ENCODE measurements at regions of chr3 and their contacts with region 1.

Region 1: DNA sequence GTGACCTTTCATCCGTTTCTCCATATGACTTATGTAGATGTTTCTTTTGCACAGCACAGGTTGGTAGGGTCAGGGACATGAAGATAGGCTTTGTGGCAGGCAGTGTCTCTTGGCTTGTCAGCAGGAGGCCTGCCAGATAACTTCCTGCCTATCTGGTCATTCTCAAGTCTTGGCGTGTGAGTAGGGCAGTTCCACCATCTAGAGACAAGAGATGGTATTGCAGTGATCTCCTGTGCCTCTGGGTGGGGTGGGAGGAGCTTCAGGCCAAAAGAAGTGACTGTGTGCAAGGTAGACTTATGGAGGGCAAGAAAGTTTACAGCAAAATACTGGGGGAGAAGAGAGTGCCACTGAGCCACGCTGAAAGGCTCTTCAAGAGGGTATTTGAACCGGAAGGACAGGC is 11.0 kb downstream of the TEX264 start:
- DNase-seq: peak; percentile 35 to 83 (median 76)
- ATAC-seq: peak; percentile 86
- H3K4me3 ChIP-seq: peak overlapping the region; percentile 46
- H3K4me3 Mint-ChIP-seq: peak overlapping the region; percentile 53 to 91 (median 73)
- H3K27ac ChIP-seq: peak overlapping the region; percentile 63
- H3K27ac Mint-ChIP-seq: peak overlapping the region; percentile 42 to 95 (median 84)
- H3K4me1 ChIP-seq: peaks cover 85 to 89% of the 10 kb centered on the region in 2 donors
- H3K4me1 Mint-ChIP-seq: peaks cover 80 to 100% (median 97%) of the 10 kb centered on the region in 7 donors
- H3K27me3 ChIP-seq: no peaks in the 10 kb centered on the region
- H3K27me3 Mint-ChIP-seq: no peaks in the 10 kb centered on the region

Region 2: DNA sequence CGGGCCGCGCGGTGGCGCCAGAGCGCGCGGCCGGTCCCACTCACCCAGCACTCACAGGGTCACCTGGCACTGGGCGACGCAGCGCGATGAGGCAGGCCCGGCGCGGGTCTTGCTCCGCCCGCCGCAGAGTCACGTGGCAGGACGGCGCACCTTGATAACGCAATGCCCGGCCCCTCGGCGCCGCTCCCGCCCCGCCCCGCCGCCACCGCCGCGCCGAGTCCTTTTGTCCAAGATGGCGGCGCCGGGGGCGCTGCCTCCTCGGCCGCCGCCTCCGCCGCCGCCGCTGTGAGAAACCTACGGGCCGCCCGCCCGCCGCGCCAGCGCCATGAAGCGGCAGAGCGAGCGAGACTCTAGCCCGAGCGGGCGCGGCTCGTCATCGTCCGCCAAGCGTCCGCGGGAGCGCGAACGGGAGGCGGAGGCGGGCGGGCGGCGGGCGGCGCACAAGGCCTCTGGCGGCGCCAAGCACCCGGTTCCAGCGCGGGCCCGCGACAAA is 291.0 kb before region 1 on chr3 and contains the start of gene RBM15B:
- CTCF ChIA-PET with region 1: interaction called, 11 read pairs
- POLR2A ChIA-PET with region 1: interaction called, 7 read pairs
- intact Hi-C with region 1: loop called (anchors 1 kb)
- DNase-seq: peak; percentile 94 to 98 (median 96)
- ATAC-seq: peak; percentile 95
- H3K4me3 ChIP-seq: peak within 1 kb of the TSS; percentile 52
- H3K4me3 Mint-ChIP-seq: peak within 1 kb of the TSS; percentile 76 to 89 (median 83)
- H3K27ac ChIP-seq: peak within 1 kb of the TSS; percentile 90
- H3K27ac Mint-ChIP-seq: peak within 1 kb of the TSS; percentile 79 to 91 (median 88)
- H3K4me1 ChIP-seq: peaks cover 46 to 53% of the 10 kb centered on the region in 2 donors
- H3K4me1 Mint-ChIP-seq: peaks cover 35 to 75% (median 67%) of the 10 kb centered on the region in 7 donors
- H3K27me3 ChIP-seq: no peaks in the 10 kb centered on the region
- H3K27me3 Mint-ChIP-seq: no peaks in the 10 kb centered on the region
- total RNA-seq, gene RBM15B: 29.9 to 40.6 (median 31.3) TPM

Region 3: DNA sequence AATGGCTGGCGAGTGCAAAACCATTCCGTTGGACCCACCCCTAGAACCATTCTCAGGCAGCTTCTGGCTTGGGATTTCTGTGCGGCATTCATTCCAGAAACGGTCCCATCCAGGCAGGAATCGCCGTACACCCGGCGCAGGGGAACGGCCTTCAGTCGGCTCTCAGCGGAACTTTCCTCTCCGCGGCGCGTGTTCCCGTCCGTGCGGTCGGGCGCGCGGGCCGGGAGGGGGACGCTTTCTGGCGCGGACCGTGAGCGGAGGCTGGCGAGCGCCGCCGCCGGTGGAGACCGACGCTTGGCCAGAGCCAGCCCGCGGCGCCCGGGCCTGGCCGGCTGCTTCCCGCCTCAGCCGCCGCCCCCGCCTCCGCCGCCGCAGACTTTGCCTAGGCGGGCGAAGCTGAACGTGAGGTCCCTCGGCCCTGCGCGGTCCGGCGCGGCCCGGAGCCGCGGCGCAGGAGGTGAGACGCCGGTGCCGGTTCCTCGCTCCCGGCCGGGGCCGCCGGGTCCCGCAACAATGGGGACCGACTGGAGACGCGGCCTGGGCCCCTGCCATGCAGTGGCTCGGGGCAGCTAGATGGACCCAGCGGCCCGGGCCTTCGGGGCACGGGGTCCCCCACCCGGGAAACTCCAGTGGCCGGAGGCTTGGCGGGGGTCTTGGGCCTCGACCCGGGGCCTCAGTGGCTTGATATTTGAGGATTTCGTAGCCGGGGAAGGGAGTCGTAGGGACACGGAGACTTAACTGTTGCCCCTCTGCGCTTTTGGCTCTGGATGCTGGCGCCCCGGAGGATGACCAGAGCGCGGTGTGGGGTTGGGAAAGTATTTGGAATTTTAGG is 143.4 kb before region 1 on chr3 and contains the start of gene RAD54L2:
- CTCF ChIA-PET with region 1: no interaction called
- POLR2A ChIA-PET with region 1: interaction called, 9 read pairs
- intact Hi-C with region 1: loop called in 1 of 2 experiments (anchors 1 kb)
- DNase-seq: peak; percentile 49 to 87 (median 69)
- ATAC-seq: peak; percentile 96
- H3K4me3 ChIP-seq: peak within 1 kb of the TSS; percentile 68
- H3K4me3 Mint-ChIP-seq: peak within 1 kb of the TSS; percentile 93 to 96 (median 94)
- H3K27ac ChIP-seq: peak within 1 kb of the TSS; percentile 80
- H3K27ac Mint-ChIP-seq: peak within 1 kb of the TSS; percentile 88 to 96 (median 92)
- H3K4me1 ChIP-seq: peaks cover 11 to 18% of the 10 kb centered on the region in 2 donors
- H3K4me1 Mint-ChIP-seq: peaks cover 21 to 57% (median 43%) of the 10 kb centered on the region in 7 donors
- H3K27me3 ChIP-seq: no peaks in the 10 kb centered on the region
- H3K27me3 Mint-ChIP-seq: no peaks in the 10 kb centered on the region
- total RNA-seq, gene RAD54L2: 38.1 to 45.2 (median 40.1) TPM

Region 4: DNA sequence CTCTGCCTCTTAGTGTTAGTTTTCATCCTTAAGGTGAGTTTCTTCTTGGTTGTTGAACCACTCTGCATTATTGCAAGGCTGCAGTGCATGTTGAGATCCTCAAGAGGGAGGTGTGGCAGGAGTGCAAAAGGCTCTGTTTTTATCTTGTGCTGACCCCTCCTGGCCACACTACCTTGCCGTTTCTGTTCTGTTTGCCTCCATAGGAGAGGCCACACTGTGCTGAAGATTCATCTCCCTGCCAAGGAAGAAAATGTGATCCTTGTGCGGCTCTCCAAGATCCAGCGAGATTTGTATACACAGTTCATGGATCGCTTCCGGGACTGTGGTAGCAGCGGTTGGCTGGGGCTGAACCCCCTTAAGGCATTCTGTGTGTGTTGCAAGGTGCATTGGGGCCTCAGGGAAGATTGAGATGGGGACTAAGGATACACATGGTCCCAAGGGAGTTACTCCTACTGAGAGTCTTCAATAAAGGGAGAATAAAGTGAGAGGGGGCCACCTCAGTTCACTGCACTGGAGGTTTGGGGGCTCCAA is 44.1 kb before region 1 on chr3:
- CTCF ChIA-PET with region 1: interaction called, 27 read pairs
- POLR2A ChIA-PET with region 1: interaction called, 8 read pairs
- intact Hi-C with region 1: loop called (anchors 1 kb)
- DNase-seq: peak in 6 of 9 donors; percentile 3 to 23 (median 15)
- ATAC-seq: peak; percentile 80
- H3K4me3 ChIP-seq: no peak overlapping the region
- H3K4me3 Mint-ChIP-seq: no peak overlapping the region
- H3K27ac ChIP-seq: no peak overlapping the region
- H3K27ac Mint-ChIP-seq: peak overlapping the region in 1 of 9 donors; percentile 36
- H3K4me1 ChIP-seq: no peaks in the 10 kb centered on the region
- H3K4me1 Mint-ChIP-seq: peaks cover 0 to 3% (median 0%) of the 10 kb centered on the region in 7 donors
- H3K27me3 ChIP-seq: no peaks in the 10 kb centered on the region
- H3K27me3 Mint-ChIP-seq: no peaks in the 10 kb centered on the region

Region 5: DNA sequence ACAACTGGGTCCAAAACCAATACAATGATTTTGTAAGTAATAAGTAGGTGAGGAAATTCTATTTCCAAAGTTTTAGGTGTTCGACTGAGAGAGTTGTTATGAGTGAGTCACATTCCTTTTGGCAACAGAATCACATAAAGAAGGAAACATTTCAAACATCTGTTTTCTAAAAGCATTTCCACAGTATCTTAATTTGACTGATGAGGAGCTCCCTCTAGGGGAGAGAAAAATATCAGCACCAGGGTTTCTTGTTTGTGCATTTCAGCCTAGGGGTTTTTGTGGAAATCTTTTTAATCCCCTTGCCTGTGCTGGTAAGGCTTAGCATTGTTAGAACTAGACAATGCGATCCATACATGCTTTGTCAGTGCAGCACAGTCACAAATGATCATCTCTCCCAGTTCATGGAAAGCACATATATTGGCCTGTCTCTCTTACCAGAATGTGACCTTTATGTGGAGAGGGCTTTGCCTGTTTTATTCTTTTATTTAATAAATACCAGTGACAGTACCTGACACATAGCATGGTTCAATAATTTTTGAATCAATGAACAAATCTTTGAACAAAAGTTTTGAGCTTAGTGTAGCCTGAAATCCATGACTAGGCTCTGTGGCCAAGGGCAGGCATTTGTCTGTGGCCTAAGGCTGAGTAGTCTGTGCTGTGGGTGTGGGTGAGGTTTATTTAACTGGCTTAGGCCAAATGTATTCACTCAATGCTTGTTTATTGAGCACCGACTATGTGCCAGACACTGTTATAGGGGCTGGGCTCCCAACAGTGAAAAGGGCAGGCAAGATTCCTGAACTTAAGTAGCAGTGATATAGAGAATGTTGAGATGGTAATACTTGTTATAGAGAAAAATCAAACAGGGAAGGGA is 118.0 kb after region 1 on chr3:
- CTCF ChIA-PET with region 1: interaction called, 6 read pairs
- POLR2A ChIA-PET with region 1: interaction called, 4 read pairs
- intact Hi-C with region 1: loop called in 1 of 2 experiments (anchors 1 kb)
- DNase-seq: peak in 7 of 9 donors; percentile 23 to 66 (median 55)
- ATAC-seq: peak; percentile 70
- H3K4me3 ChIP-seq: no peak overlapping the region
- H3K4me3 Mint-ChIP-seq: no peak overlapping the region
- H3K27ac ChIP-seq: no peak overlapping the region
- H3K27ac Mint-ChIP-seq: no peak overlapping the region
- H3K4me1 ChIP-seq: no peaks in the 10 kb centered on the region
- H3K4me1 Mint-ChIP-seq: peaks cover 4 to 48% (median 13%) of the 10 kb centered on the region in 7 donors
- H3K27me3 ChIP-seq: no peaks in the 10 kb centered on the region
- H3K27me3 Mint-ChIP-seq: peaks cover 5 to 16% (median 13%) of the 10 kb centered on the region in 5 donors

Region 6: DNA sequence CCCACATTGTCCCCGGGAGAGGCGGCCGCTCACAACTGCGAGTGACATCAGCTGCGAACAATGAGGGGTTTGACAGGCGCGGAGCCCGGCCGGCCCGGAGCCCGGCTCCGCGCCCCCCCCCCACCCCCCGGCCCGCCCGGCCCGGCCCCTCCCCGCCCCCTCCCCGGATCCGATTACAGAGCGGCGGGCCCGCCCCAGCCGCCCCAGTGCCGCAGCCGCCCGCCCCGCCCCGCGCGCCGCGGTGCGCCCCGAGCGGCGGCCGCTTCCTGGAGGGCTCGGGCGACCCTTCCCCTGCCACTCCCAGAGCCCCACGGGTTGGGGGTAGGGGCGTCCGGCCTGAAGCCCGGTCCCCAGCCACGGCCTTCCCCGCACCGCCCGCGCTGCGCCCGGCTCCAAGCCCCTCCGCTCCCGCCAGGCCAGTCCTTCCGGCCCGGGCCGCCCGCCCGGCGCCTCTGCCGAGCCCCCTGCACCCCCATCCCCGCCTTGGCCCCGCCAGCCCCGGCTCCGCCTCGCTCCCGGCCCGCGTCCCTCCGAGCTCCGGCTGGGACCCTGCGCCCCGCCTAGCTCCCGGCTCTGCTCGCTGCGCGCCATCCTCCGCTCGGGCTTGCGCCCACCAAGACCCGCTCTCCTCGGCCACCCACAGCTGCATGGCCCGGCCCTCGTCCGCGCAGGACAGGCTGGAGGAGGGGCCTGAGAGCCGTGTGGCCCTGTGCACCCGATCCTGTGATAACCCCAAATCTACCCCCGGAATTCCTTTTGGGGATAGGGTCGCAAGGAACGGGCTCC is 285.5 kb after region 1 on chr3 and contains the start of gene PCBP4:
- CTCF ChIA-PET with region 1: no interaction called
- POLR2A ChIA-PET with region 1: no interaction called
- intact Hi-C with region 1: no loop called
- DNase-seq: peak in 5 of 9 donors; percentile 17 to 61 (median 31)
- ATAC-seq: peak; percentile 79
- H3K4me3 ChIP-seq: peak within 1 kb of the TSS; percentile 70
- H3K4me3 Mint-ChIP-seq: peak within 1 kb of the TSS; percentile 77 to 95 (median 86)
- H3K27ac ChIP-seq: peak within 1 kb of the TSS; percentile 75
- H3K27ac Mint-ChIP-seq: peak within 1 kb of the TSS; percentile 36 to 80 (median 66)
- H3K4me1 ChIP-seq: peaks cover 7 to 9% of the 10 kb centered on the region in 2 donors
- H3K4me1 Mint-ChIP-seq: peaks cover 23 to 48% (median 25%) of the 10 kb centered on the region in 7 donors
- H3K27me3 ChIP-seq: no peaks in the 10 kb centered on the region
- H3K27me3 Mint-ChIP-seq: peaks cover 0 to 10% (median 0%) of the 10 kb centered on the region in 5 donors
- total RNA-seq, gene PCBP4: 12.1 to 21.1 (median 15.0) TPM

Region 7: GRCh38 chr3:51982782-51983577 is 300.9 kb after region 1 on chr3 and contains the start of gene ACY1:
- CTCF ChIA-PET with region 1: interaction called, 10 read pairs
- POLR2A ChIA-PET with region 1: interaction called, 7 read pairs
- intact Hi-C with region 1: no loop called
- DNase-seq: peak; percentile 48 to 86 (median 56)
- ATAC-seq: peak; percentile 85
- H3K4me3 ChIP-seq: peak within 1 kb of the TSS; percentile 77
- H3K4me3 Mint-ChIP-seq: peak within 1 kb of the TSS; percentile 83 to 99 (median 94)
- H3K27ac ChIP-seq: peak within 1 kb of the TSS; percentile 83
- H3K27ac Mint-ChIP-seq: peak within 1 kb of the TSS; percentile 81 to 97 (median 90)
- H3K4me1 ChIP-seq: peaks cover 10 to 12% of the 10 kb centered on the region in 2 donors
- H3K4me1 Mint-ChIP-seq: peaks cover 18 to 27% (median 22%) of the 10 kb centered on the region in 7 donors
- H3K27me3 ChIP-seq: no peaks in the 10 kb centered on the region
- H3K27me3 Mint-ChIP-seq: no peaks in the 10 kb centered on the region
- total RNA-seq, gene ACY1: 7.8 to 28.3 (median 12.0) TPM

Region 8: GRCh38 chr3:52536369-52537164 is 854.5 kb after region 1 on chr3 and contains the start of gene UQCC5:
- CTCF ChIA-PET with region 1: no interaction called
- POLR2A ChIA-PET with region 1: no interaction called
- intact Hi-C with region 1: loop called in 1 of 2 experiments (anchors 10 kb)
- DNase-seq: peak; percentile 89 to 98 (median 97)
- ATAC-seq: peak; percentile 95
- H3K4me3 ChIP-seq: peak within 1 kb of the TSS; percentile 67
- H3K4me3 Mint-ChIP-seq: peak within 1 kb of the TSS; percentile 96 to 100 (median 99)
- H3K27ac ChIP-seq: peak within 1 kb of the TSS; percentile 85
- H3K27ac Mint-ChIP-seq: peak within 1 kb of the TSS; percentile 96 to 99 (median 98)
- H3K4me1 ChIP-seq: peaks cover 24 to 30% of the 10 kb centered on the region in 2 donors
- H3K4me1 Mint-ChIP-seq: peaks cover 29 to 66% (median 50%) of the 10 kb centered on the region in 7 donors
- H3K27me3 ChIP-seq: no peaks in the 10 kb centered on the region
- H3K27me3 Mint-ChIP-seq: no peaks in the 10 kb centered on the region
- total RNA-seq, gene UQCC5: 5.4 to 11.9 (median 10.7) TPM

Region 9: GRCh38 chr3:52907497-52907896 is 1225.4 kb after region 1 on chr3:
- CTCF ChIA-PET with region 1: no interaction called
- POLR2A ChIA-PET with region 1: no interaction called
- intact Hi-C with region 1: no loop called
- DNase-seq: peak in 1 of 9 donors; percentile 16
- ATAC-seq: no peak
- H3K4me3 ChIP-seq: no peak overlapping the region
- H3K4me3 Mint-ChIP-seq: no peak overlapping the region
- H3K27ac ChIP-seq: no peak overlapping the region
- H3K27ac Mint-ChIP-seq: peak overlapping the region in 3 of 9 donors; percentile 51 to 56 (median 53)
- H3K4me1 ChIP-seq: no peaks in the 10 kb centered on the region
- H3K4me1 Mint-ChIP-seq: no peaks in the 10 kb centered on the region
- H3K27me3 ChIP-seq: no peaks in the 10 kb centered on the region
- H3K27me3 Mint-ChIP-seq: no peaks in the 10 kb centered on the region